ENCODE measurements at regions of chr1 and their contacts with region 1.

Region 1: GRCh38 chr1:41416552-41417334 is 55.5 kb downstream of the FOXO6 start:
- DNase-seq: peak; percentile 90
- H3K4me3 ChIP-seq: no peak overlapping the region; a peak in 1 of 4 replicates
- H3K27ac ChIP-seq: no peak overlapping the region
- H3K4me1 ChIP-seq: peaks cover 12 to 45% of the 10 kb centered on the region in 2 experiments; a peak in 3 of 4 replicates
- H3K27me3 ChIP-seq: no peaks in the 10 kb centered on the region
- CTCF ChIP-seq: peak; percentile 94
- EP300 ChIP-seq: no peak
- RAD21 ChIP-seq: peak; percentile 97

Region 2: DNA sequence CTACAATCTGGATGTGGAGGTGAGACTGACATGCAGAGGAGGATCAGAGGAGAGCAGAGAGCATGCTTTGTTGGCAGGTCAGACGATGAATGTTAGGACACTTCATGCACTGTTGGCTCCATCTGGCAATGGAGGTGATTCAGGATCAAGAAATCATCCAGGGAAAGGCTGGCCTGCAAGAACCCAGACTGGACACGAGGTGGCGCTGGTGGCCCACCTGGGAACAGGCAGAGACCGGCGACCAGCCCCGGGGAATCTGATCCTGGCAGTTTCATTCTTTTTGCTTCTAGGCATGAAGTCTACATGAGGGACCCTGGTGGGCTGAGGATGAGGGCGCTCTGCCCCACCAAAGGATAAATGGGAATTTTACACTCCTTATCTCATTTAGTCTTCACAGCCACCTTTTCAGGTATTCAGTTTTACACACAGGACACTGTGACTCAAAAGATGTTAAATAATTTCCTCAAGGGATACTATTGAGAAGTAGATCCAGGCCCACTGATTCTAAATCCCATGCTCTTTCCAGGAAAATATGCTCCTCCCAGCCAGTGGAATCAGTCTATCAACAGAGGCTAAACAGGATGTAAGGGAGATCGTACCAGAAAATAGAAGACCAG is 148.5 kb before region 1 on chr1:
- CTCF ChIA-PET with region 1: interaction called, 30 read pairs
- POLR2A ChIA-PET with region 1: no interaction called
- DNase-seq: peak; percentile 86
- H3K4me3 ChIP-seq: no peak overlapping the region
- H3K27ac ChIP-seq: no peak overlapping the region
- H3K4me1 ChIP-seq: peaks cover 0 to 12% of the 10 kb centered on the region in 2 experiments; a peak in 1 of 4 replicates
- H3K27me3 ChIP-seq: no peaks in the 10 kb centered on the region
- CTCF ChIP-seq: peak; percentile 88
- EP300 ChIP-seq: no peak
- RAD21 ChIP-seq: peak; percentile 99

Region 3: GRCh38 chr1:41313661-41314131 is 103.0 kb before region 1 on chr1:
- CTCF ChIA-PET with region 1: interaction called, 109 read pairs
- POLR2A ChIA-PET with region 1: no interaction called
- DNase-seq: peak; percentile 47
- H3K4me3 ChIP-seq: no peak overlapping the region
- H3K27ac ChIP-seq: no peak overlapping the region
- H3K4me1 ChIP-seq: no peaks in the 10 kb centered on the region
- H3K27me3 ChIP-seq: no peaks in the 10 kb centered on the region
- CTCF ChIP-seq: peak; percentile 58
- EP300 ChIP-seq: no peak
- RAD21 ChIP-seq: peak; percentile 35; the same call in 1 of the 2 replicates

Region 4: GRCh38 chr1:41322835-41323627 is 93.7 kb before region 1 on chr1:
- CTCF ChIA-PET with region 1: interaction called, 109 read pairs
- POLR2A ChIA-PET with region 1: no interaction called
- DNase-seq: peak; percentile 79
- H3K4me3 ChIP-seq: no peak overlapping the region
- H3K27ac ChIP-seq: no peak overlapping the region
- H3K4me1 ChIP-seq: peaks cover 0 to 17% of the 10 kb centered on the region in 2 experiments; a peak in 1 of 4 replicates
- H3K27me3 ChIP-seq: no peaks in the 10 kb centered on the region
- CTCF ChIP-seq: peak; percentile 60
- EP300 ChIP-seq: no peak
- RAD21 ChIP-seq: peak; percentile 81

Region 5: DNA sequence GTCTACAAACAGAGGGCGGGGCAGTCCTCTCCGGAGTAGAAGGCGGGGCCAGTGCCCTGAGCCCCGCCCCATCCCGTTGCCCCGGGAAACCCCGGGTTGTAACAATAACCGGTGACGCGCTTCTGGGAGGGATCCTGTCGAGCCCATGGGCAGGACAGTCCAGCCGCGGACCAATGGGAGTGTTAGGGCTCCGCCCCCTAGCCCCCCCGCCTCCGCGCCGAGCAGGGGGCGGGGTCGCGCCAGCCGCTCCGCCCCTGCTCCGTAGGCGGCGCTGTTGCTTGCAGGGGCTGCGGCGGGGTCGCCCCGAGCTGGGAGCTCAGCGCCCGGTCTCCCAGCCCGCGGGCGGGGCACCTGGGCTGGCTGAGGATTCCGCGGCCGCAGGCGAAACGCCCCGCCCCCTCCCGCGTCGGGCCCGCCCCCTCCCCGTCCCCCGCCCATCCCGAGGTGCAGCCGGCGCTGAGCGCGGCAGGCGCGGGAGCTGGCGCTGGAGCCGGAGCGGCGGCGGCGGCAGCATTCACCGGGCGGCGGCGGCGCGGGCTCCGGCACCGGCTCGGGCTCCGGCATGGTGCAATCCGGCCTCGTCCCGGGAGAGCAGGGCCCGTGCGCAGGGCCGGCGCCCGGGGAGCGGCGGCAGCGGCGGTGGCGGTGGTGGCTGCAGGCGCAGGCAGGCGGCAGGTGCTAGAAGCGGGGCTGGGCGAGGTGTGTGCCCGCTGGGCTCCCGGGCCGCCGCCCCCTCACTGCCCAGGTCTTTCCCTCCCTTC is 55.6 kb before region 1 on chr1 and contains the start of gene FOXO6:
- CTCF ChIA-PET with region 1: interaction called, 56 read pairs
- POLR2A ChIA-PET with region 1: no interaction called
- DNase-seq: peak; percentile 99
- H3K4me3 ChIP-seq: peak within 1 kb of the TSS; percentile 64 to 66
- H3K27ac ChIP-seq: peak within 1 kb of the TSS in 1 of 2 experiments; percentile 53; a peak in 1 of 4 replicates
- H3K4me1 ChIP-seq: peaks cover 33 to 68% of the 10 kb centered on the region in 2 experiments; a peak in 3 of 4 replicates
- H3K27me3 ChIP-seq: no peaks in the 10 kb centered on the region
- CTCF ChIP-seq: peak; percentile 38
- EP300 ChIP-seq: no peak
- RAD21 ChIP-seq: peak; percentile 42
- polyA plus RNA-seq, gene FOXO6: 0.11 and 0.35 TPM in 2 replicates

Region 6: DNA sequence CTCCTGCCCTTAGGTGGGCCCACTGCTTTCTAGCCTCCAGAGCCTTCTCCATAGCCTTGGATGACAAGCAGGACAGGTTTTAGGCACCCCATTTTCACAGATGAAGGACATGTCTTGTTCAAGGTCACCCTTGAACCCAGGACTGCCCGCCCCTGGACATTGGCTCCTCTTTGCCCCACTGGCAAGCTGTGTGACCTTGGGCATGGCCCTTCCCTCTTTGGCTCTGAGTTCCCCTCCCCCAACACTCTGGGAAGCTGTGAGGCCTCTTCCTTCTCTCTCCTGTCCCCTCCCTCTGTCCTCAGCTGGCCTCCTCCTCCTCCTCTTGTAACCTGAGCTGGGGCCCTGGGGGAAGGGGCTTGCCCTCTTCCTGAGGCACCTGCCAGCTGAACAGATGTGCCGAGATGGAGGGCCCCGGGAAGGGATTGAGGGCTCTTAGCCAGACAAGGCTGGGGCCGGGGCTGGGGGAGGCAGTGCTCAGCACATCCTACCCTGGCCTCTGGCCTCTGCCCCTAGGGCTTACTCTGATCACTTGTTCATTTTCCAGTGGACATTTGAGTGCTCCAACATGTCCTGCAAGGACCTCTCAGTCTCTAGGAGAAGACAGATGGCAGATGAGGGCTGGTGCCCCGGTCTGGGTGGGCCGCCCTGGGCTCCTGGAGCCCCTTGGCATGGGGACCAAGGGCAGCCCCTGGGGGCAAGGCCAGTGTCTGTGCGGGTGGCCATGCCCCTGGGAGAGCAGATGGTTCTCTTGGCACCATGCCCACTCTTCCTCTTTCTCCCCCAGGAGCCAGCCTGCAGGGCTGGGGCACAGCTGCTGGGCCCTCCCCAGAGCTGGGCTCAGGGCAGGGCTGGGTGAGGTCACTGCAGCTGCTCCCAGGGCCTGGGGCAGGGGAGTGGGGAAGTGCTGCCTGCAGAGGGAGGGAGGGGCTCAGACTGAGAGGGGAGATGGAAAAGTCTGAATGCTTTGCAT is 44.8 kb before region 1 on chr1:
- CTCF ChIA-PET with region 1: interaction called, 12 read pairs
- POLR2A ChIA-PET with region 1: no interaction called
- DNase-seq: peak; percentile 71
- H3K4me3 ChIP-seq: no peak overlapping the region
- H3K27ac ChIP-seq: no peak overlapping the region; a peak in 1 of 4 replicates
- H3K4me1 ChIP-seq: peaks cover 10 to 42% of the 10 kb centered on the region in 2 experiments; a peak in 3 of 4 replicates
- H3K27me3 ChIP-seq: no peaks in the 10 kb centered on the region
- CTCF ChIP-seq: no peak
- EP300 ChIP-seq: no peak
- RAD21 ChIP-seq: no peak

Region 7: DNA sequence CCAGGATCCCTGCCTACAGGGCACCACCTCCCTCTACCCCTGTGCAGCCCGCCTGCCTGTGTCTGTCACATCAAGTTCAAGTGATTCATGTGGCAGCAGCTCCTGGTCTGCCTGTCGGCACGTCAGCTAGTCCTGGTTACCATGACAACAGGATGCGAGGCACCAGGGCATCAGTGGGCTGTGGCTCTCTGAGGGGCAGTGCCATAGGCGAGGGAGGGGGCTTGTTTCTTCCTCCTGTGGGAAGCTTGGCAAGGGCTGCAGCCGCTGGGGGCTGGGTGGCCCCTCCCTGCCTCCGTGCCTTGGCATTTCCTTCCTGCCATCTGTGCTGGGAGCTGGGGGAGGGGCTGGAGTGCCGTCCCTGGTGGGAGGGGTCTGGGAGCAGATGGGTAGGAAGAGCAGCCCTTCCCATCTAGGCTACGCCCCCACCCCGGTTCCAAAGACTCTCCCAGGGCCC is 12.4 kb before region 1 on chr1:
- CTCF ChIA-PET with region 1: interaction called, 34 read pairs
- POLR2A ChIA-PET with region 1: interaction called, 3 read pairs
- DNase-seq: peak; percentile 90
- H3K4me3 ChIP-seq: peak overlapping the region; percentile 4 to 16; a peak in 1 of 4 replicates
- H3K27ac ChIP-seq: peak overlapping the region in 1 of 2 experiments; percentile 50; a peak in 1 of 4 replicates
- H3K4me1 ChIP-seq: peaks cover 7 to 21% of the 10 kb centered on the region in 2 experiments; a peak in 3 of 4 replicates
- H3K27me3 ChIP-seq: no peaks in the 10 kb centered on the region
- CTCF ChIP-seq: no peak
- EP300 ChIP-seq: peak in 1 of 2 experiments; percentile 33; a peak in 1 of 4 replicates
- RAD21 ChIP-seq: no peak

Measured in SK-N-SH (cell line).